ENCODE measurements at regions of chr20 and their contacts with region 1.

Region 1: GRCh38 chr20:37564388-37565133 is 36.9 kb upstream of the BLCAP start:
- DNase-seq: peak; percentile 69
- ATAC-seq: peak; percentile 69

Region 2: GRCh38 chr20:36210436-36211020 is 1354.0 kb before region 1 on chr20:
- intact Hi-C with region 1: no loop called
- DNase-seq: no peak
- ATAC-seq: no peak

Region 3: DNA sequence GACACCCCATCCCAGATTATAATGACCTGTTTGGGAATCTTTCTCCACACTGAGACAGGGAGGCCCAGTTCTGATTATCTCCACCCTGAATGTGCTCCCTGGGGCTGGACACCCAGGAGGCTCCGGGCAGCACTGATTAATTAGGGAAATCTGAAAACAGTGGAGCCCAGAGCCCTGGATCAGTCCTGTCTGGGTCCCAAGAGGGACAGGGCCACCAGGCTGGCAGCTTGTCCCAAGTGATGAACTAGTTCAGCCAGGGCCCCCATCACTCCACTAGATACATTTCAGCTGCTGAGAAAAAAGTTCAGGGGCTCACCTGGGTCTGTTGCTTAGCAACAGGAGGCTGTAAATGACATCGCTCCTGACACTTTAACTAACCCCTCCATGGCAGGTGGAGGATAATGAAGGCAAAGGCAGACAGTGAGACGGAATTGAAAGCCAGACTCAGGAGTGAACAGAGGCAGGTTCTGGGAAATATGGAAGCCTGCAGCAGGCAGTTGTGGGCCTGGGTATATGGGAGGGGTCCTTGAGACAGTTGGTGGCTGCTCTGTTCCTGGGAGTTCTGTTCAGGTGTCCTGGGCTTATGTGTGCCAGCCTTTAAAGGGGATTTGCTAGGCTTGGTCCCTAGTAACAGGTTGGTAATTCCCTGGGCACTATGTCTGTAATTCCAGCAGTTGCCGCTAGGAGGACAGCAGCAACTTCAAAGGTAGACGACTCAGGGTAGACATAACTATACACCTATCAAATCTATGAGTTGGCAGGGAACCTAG is 51.0 kb after region 1 on chr20:
- intact Hi-C with region 1: no loop called
- DNase-seq: no peak
- ATAC-seq: no peak

Region 4: DNA sequence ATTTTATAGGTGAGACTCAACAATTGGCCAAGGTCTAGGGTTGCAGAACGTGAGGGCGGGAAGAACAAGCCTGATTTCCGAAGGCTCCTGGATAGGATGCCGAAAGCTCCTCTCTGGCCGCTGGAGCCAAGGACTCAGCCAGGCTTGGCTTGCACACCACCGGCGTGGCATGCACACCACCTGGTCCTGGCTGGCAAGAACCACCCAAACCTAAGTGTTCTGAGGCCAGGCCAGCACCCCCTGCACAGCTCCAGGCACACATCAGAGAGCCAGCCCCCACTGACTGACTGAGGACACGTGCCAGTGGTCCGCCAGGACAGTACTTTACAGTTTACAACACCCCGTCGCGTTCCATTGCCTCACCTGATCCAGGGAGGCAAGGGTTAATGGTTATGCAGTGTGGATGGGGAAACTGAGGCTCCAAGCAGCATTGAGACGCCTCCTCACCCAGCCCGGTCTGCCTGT is 600.1 kb after region 1 on chr20:
- intact Hi-C with region 1: loop called (anchors 5 kb)
- DNase-seq: no peak
- ATAC-seq: no peak